Natural killer cell (primary cell): ENCODE measurements at regions of chr7 and their contacts with region 1.

Region 1: DNA sequence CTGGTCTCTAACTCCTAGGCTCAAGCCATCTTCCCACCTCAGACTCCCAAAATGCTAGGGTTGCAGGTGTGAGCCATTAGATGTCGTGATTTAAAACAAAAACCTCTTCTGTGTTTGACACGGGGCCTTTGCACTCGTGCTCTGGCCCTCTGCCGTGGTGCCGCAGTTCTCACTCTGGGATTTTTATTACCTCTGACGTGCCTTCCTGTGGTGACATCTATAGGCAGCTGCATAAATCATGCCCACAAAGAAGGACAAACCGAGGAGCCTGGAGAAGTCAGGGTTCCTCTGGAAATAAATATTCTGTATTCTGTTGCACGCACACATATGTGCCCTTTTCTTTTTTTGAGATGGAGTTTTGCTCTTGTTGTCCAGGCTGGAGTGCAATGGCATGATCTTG is 25.9 kb upstream of the OCM start:
- DNase-seq: no peak
- ATAC-seq: no peak
- H3K4me3 ChIP-seq: no peak overlapping the region
- H3K4me3 Mint-ChIP-seq: no peak overlapping the region
- H3K27ac ChIP-seq: no peak overlapping the region
- H3K27ac Mint-ChIP-seq: no peak overlapping the region
- H3K4me1 ChIP-seq: peaks cover 12% of the 10 kb centered on the region
- H3K4me1 Mint-ChIP-seq: peaks cover 0 to 5% of the 10 kb centered on the region in 2 donors
- H3K27me3 ChIP-seq: no peaks in the 10 kb centered on the region
- H3K27me3 Mint-ChIP-seq: no peaks in the 10 kb centered on the region
- CTCF ChIP-seq: no peak

Region 2: GRCh38 chr7:6323967-6324701 is 469.4 kb after region 1 on chr7:
- intact Hi-C with region 1: loop called (anchors 2 kb)
- DNase-seq: no peak
- ATAC-seq: no peak
- H3K4me3 ChIP-seq: no peak overlapping the region
- H3K4me3 Mint-ChIP-seq: no peak overlapping the region
- H3K27ac ChIP-seq: no peak overlapping the region
- H3K27ac Mint-ChIP-seq: no peak overlapping the region
- H3K4me1 ChIP-seq: no peaks in the 10 kb centered on the region
- H3K4me1 Mint-ChIP-seq: peaks cover 5 to 6% of the 10 kb centered on the region in 2 donors
- H3K27me3 ChIP-seq: no peaks in the 10 kb centered on the region
- H3K27me3 Mint-ChIP-seq: peaks cover 0 to 3% of the 10 kb centered on the region in 2 donors
- CTCF ChIP-seq: no peak